ENCODE measurements at regions of chr4 and their contacts with region 1.

Region 1: DNA sequence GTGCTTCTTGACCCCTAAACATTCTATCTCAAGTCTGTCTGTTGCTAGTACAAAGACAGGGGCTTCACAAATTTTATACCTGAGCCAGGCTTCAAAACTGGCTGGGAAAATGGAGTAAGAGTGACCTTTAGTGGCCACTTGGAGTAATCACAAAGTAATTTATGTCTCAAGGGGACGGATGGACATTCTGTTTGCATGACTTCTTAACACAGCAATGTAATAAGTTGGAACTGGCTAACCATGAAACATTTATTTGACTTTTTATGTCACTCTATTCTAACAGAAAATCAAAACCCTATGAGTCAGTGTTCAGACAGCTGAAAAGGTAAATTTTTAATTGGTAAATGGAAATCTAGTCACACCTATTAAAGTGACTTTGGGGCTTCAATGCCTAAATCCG is 600.6 kb downstream of the ANKRD50 start:
- DNase-seq: peak; percentile 76
- ATAC-seq: peak; percentile 73
- H3K4me3 ChIP-seq: no peak overlapping the region
- H3K27ac ChIP-seq: no peak overlapping the region
- H3K4me1 ChIP-seq: peaks cover 8% of the 10 kb centered on the region
- H3K27me3 ChIP-seq: no peaks in the 10 kb centered on the region
- CTCF ChIP-seq: peak; percentile 76

Region 2: DNA sequence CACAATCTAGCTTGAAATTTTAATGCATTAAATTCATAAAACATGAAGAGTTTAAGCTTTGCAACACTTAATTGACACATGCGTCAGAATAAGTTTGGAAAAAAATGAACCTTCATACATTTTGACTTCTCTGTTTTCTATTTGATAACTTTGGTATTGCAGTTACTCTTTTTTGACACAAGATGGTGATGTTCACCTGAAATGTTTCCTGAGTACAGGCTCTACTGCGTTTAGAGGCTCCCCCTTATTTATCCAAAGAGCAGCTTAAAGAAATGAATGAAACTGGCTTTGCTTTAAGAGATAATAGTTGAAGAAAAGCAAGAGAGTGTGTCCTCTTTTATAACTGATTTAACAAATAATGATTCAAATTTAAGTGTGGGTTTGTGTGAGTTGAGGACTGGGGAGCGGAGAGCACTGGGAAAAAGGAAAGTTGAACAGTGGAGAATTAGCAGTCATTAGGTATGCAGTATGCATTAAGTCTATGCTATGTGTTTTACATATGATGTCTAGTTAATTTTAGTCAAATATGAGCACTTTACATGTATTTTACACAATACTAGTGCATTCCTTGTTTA is 1008.9 kb before region 1 on chr4:
- CTCF ChIA-PET with region 1: no interaction called
- POLR2A ChIA-PET with region 1: no interaction called
- intact Hi-C with region 1: loop called (anchors 5 kb)
- DNase-seq: peak; percentile 54
- ATAC-seq: peak; percentile 54; the same call in 1 of the 2 replicates
- H3K4me3 ChIP-seq: no peak overlapping the region
- H3K27ac ChIP-seq: no peak overlapping the region
- H3K4me1 ChIP-seq: no peaks in the 10 kb centered on the region
- H3K27me3 ChIP-seq: no peaks in the 10 kb centered on the region
- CTCF ChIP-seq: peak; percentile 82

Region 3: GRCh38 chr4:123661080-123661737 is 450.7 kb before region 1 on chr4:
- CTCF ChIA-PET with region 1: no interaction called
- POLR2A ChIA-PET with region 1: no interaction called
- intact Hi-C with region 1: loop called (anchors 5 kb)
- DNase-seq: peak; percentile 56
- ATAC-seq: no peak
- H3K4me3 ChIP-seq: no peak overlapping the region
- H3K27ac ChIP-seq: no peak overlapping the region
- H3K4me1 ChIP-seq: no peaks in the 10 kb centered on the region
- H3K27me3 ChIP-seq: no peaks in the 10 kb centered on the region
- CTCF ChIP-seq: peak; percentile 65

Region 4: GRCh38 chr4:123994917-123995316 is 117.0 kb before region 1 on chr4:
- CTCF ChIA-PET with region 1: no interaction called
- POLR2A ChIA-PET with region 1: no interaction called
- intact Hi-C with region 1: loop called (anchors 5 kb)
- DNase-seq: peak; percentile 26
- ATAC-seq: no peak
- H3K4me3 ChIP-seq: no peak overlapping the region
- H3K27ac ChIP-seq: no peak overlapping the region
- H3K4me1 ChIP-seq: peaks cover 9% of the 10 kb centered on the region; the same call in 1 of the 2 replicates
- H3K27me3 ChIP-seq: no peaks in the 10 kb centered on the region
- CTCF ChIP-seq: peak; percentile 45; the same call in 1 of the 2 replicates

Region 5: DNA sequence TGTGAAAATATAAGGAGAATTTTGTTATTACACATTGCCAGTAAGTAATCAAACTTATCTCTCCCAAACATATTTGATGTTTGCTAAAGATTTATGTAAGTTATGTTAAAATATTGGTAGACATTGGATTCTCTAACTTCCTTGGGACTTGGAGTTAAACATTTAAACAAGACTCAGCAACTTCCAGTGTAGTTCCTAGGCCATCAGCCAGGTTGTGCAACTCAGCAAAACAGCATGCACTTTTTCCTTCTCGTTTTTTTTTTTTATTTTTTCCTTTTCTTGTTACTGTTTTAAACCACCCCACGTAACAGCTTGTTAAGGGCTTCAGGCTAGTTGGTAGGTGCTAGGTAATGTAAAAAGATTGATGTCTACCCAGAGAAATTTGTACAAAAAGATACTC is 90.2 kb after region 1 on chr4:
- CTCF ChIA-PET with region 1: no interaction called
- POLR2A ChIA-PET with region 1: no interaction called
- intact Hi-C with region 1: loop called (anchors 5 kb)
- DNase-seq: no peak
- ATAC-seq: no peak
- H3K4me3 ChIP-seq: no peak overlapping the region
- H3K27ac ChIP-seq: no peak overlapping the region
- H3K4me1 ChIP-seq: peaks cover 66% of the 10 kb centered on the region
- H3K27me3 ChIP-seq: no peaks in the 10 kb centered on the region
- CTCF ChIP-seq: no peak

Region 6: GRCh38 chr4:124278291-124278876 is 166.5 kb after region 1 on chr4:
- CTCF ChIA-PET with region 1: no interaction called
- POLR2A ChIA-PET with region 1: no interaction called
- intact Hi-C with region 1: no loop called
- DNase-seq: peak; percentile 69
- ATAC-seq: peak; percentile 50
- H3K4me3 ChIP-seq: no peak overlapping the region
- H3K27ac ChIP-seq: peak overlapping the region; percentile 62
- H3K4me1 ChIP-seq: peaks cover 29% of the 10 kb centered on the region
- H3K27me3 ChIP-seq: no peaks in the 10 kb centered on the region
- CTCF ChIP-seq: no peak

Region 7: GRCh38 chr4:124322234-124323065 is 210.5 kb after region 1 on chr4:
- CTCF ChIA-PET with region 1: no interaction called
- POLR2A ChIA-PET with region 1: no interaction called
- intact Hi-C with region 1: loop called (anchors 5 kb)
- DNase-seq: peak; percentile 69
- ATAC-seq: no peak
- H3K4me3 ChIP-seq: no peak overlapping the region
- H3K27ac ChIP-seq: no peak overlapping the region
- H3K4me1 ChIP-seq: peaks cover 17% of the 10 kb centered on the region
- H3K27me3 ChIP-seq: no peaks in the 10 kb centered on the region
- CTCF ChIP-seq: peak; percentile 63

Region 8: GRCh38 chr4:124694946-124695598 is 583.1 kb after region 1 on chr4:
- CTCF ChIA-PET with region 1: no interaction called
- POLR2A ChIA-PET with region 1: no interaction called
- intact Hi-C with region 1: no loop called
- DNase-seq: no peak
- ATAC-seq: no peak
- H3K4me3 ChIP-seq: no peak overlapping the region
- H3K27ac ChIP-seq: no peak overlapping the region
- H3K4me1 ChIP-seq: no peaks in the 10 kb centered on the region
- H3K27me3 ChIP-seq: no peaks in the 10 kb centered on the region
- CTCF ChIP-seq: no peak